ENCODE measurements at regions of chr1 and their contacts with region 1.

Region 1: GRCh38 chr1:210944252-210944651 is 189.7 kb downstream of the KCNH1 start:
- DNase-seq: no peak

Region 2: GRCh38 chr1:210597555-210598134 is 346.6 kb before region 1 on chr1:
- intact Hi-C with region 1: loop called (anchors 10 kb)
- DNase-seq: no peak

Region 3: GRCh38 chr1:211013346-211014240 is 69.3 kb after region 1 on chr1:
- intact Hi-C with region 1: no loop called
- DNase-seq: peak in 2 of 42 donors; percentile 21 to 27